ENCODE measurements at regions of chr22 and their contacts with region 1.

Region 1: GRCh38 chr22:42816336-42816735 is 40.7 kb downstream of the ARFGAP3 start:
- DNase-seq: no peak
- ATAC-seq: peak; percentile 48 to 63
- H3K4me3 ChIP-seq: no peak overlapping the region
- H3K27ac ChIP-seq: peak overlapping the region; percentile 7
- H3K4me1 ChIP-seq: peaks cover 34% of the 10 kb centered on the region
- H3K27me3 ChIP-seq: no peaks in the 10 kb centered on the region
- CTCF ChIP-seq: no peak

Region 2: DNA sequence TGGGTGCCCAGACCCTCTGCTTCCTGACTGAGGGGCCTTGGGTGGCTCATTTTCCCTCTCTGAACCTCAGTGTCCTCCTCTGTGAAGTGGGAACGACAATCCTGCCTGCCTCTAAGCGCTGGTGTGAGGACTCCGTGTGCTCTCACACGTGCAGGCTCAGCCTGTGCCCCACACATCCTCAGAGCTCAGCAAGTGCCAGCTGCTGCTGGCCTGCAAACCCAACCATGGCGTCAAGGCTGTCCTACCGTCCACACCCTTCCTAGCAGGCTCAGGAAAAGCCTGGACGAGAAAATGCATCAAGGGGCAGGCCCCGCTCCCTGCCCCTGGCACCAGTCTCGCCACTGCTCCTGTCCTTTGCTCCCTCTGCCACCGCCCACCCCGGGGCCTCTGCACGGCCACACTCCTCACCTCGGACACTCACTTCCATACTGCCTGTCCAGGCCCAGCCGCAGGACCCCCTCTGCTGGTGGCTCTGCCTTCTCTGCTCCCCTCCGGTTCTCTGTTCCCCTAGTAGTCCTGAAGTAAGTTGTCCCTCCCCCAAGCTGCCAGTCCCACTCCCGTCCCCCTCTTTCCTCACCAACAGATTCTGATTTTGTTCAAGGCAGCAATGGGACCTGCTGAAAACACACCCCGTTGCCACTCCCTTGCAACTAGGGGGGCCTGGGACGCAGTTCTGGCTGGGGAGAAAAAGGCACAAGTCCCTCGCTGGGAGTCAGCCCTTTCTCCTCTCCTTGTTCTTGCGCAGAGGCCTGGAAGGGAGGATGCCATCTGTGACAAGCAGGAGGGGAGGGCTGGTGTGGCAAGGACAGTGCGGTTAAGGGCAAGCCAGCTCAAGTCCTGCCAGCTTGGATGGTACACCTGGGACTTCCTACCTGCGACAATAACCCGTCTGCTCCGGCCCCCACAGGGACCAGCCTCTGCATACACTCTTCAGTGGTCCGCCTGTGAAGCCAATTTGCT is 21.5 kb before region 1 on chr22:
- intact Hi-C with region 1: loop called (anchors 2 kb)
- DNase-seq: no peak
- ATAC-seq: peak in 1 of 2 donors; percentile 3
- H3K4me3 ChIP-seq: no peak overlapping the region
- H3K27ac ChIP-seq: no peak overlapping the region
- H3K4me1 ChIP-seq: peaks cover 11% of the 10 kb centered on the region
- H3K27me3 ChIP-seq: no peaks in the 10 kb centered on the region
- CTCF ChIP-seq: peak; percentile 14

Measured in lower lobe of right lung (tissue), 2 donors.